Caco-2 (cell line): ENCODE measurements at regions of chr9 and their contacts with region 1.

Region 1: GRCh38 chr9:100426530-100427428 is at the start of gene MSANTD3:
- DNase-seq: peak; percentile 69 to 84
- H3K4me3 ChIP-seq: peak within 1 kb of the TSS; percentile 63
- H3K4me3 Mint-ChIP-seq: peak within 1 kb of the TSS; percentile 99
- H3K27ac Mint-ChIP-seq: peak within 1 kb of the TSS; percentile 99
- H3K4me1 ChIP-seq: peaks cover 20% of the 10 kb centered on the region
- H3K4me1 Mint-ChIP-seq: peaks cover 37% of the 10 kb centered on the region
- H3K27me3 ChIP-seq: no peaks in the 10 kb centered on the region
- H3K27me3 Mint-ChIP-seq: no peaks in the 10 kb centered on the region
- CTCF ChIP-seq: no peak
- total RNA-seq, gene MSANTD3: 25.9 and 27.7 TPM in 2 replicates

Region 2: GRCh38 chr9:100352727-100353505 is 73.9 kb before region 1 on chr9 and contains the start of gene TEX10:
- CTCF ChIA-PET with region 1: no interaction called
- POLR2A ChIA-PET with region 1: no interaction called
- intact Hi-C with region 1: loop called (anchors 5 kb)
- DNase-seq: peak; percentile 90 to 91
- H3K4me3 ChIP-seq: peak within 1 kb of the TSS; percentile 99
- H3K4me3 Mint-ChIP-seq: peak within 1 kb of the TSS; percentile 99
- H3K27ac Mint-ChIP-seq: peak within 1 kb of the TSS; percentile 92
- H3K4me1 ChIP-seq: peaks cover 7% of the 10 kb centered on the region; the same call in 1 of the 2 replicates
- H3K4me1 Mint-ChIP-seq: peaks cover 26% of the 10 kb centered on the region
- H3K27me3 ChIP-seq: no peaks in the 10 kb centered on the region
- H3K27me3 Mint-ChIP-seq: no peaks in the 10 kb centered on the region
- CTCF ChIP-seq: no peak
- total RNA-seq, gene TEX10: 31.1 and 35.0 TPM in 2 replicates

Region 3: DNA sequence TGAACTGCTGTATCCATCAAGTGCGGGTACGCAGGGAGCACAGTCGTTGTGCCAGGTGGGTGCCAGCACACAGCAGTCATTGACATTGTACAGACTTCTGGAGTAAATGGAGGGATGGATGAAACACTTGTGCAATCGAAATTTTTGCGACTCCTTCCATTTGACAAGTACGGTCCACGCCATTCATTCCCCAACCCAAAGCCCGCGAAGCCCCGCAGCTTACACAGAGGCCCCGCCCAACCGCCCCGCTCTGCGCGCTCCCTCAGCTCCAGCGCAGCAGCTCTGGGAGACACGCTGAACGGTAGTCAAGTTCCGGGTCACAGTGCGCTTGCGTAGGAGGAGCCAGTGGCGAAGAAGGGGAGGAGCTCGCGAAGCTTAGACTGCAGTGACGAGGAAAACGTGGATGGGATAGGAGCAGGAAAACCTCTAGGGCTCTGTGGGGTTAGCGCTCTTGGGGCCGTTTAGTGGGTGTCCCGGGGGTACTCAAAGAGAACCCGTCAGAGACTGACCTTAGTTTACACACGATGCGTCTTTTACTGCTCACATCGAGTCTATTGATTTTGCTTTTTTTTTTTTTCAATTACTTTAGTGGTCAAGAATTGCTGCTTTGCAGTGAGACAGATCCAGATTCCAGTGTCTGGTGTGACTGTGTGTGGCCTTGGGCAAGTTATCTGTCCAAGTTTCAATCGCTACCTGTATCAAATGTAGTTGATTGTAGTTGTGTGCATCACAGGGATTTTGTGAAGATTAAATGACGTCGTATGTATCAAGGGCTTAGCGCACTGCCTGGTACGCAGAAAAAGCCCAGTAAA is 15.1 kb before region 1 on chr9:
- CTCF ChIA-PET with region 1: no interaction called
- POLR2A ChIA-PET with region 1: interaction called, 12 read pairs
- intact Hi-C with region 1: loop called (anchors 1 kb)
- DNase-seq: peak; percentile 91 to 95
- H3K4me3 ChIP-seq: peak overlapping the region; percentile 48
- H3K4me3 Mint-ChIP-seq: peak overlapping the region; percentile 74
- H3K27ac Mint-ChIP-seq: peak overlapping the region; percentile 39
- H3K4me1 ChIP-seq: peaks cover 11% of the 10 kb centered on the region; the same call in 1 of the 2 replicates
- H3K4me1 Mint-ChIP-seq: no peaks in the 10 kb centered on the region
- H3K27me3 ChIP-seq: no peaks in the 10 kb centered on the region
- H3K27me3 Mint-ChIP-seq: no peaks in the 10 kb centered on the region
- CTCF ChIP-seq: no peak

Region 4: DNA sequence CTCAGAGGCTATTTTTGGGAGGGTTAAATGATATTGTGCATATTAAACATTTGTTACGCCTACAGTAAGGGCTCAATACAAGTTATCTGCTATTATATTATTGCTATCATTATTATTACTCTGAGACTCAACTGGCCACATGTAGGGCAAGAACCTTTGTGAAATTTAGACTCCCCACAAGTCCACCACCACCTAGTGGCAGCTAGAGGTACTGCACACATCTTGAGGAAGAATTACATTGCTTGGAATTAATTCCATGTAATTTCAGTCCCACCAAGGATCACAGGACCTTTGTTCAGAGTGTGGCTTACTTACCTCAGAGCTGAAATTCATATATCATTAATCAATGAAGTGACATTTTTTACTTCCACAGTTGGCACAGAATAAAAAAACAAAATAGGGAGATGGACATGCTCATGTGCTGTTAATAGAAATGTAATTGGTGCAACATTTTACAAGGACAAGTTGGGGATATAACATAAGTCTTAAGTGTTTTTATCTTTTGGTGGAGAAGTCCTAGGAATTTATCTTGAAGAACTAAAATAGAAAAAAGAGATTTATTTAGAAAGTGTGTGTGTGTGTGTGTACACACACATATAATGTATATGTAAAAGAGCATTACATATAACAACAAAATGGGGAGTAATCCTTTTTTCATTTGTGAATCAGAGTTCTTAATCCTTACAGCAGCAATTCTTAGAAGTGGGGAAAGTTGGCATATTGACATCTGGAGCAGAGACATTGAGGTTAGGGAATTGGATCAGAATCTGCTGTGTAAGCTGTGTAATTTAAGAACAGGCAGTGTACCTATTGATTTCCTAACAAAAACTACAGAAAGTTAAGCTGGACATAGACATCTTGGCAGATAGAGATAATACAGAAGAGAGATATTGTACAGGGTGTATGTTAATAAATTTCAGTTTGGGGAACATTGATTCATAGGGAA is 11.4 kb after region 1 on chr9:
- CTCF ChIA-PET with region 1: interaction called, 9 read pairs
- POLR2A ChIA-PET with region 1: no interaction called
- intact Hi-C with region 1: loop called (anchors 1 kb)
- DNase-seq: peak; percentile 78 to 79
- H3K4me3 ChIP-seq: no peak overlapping the region
- H3K4me3 Mint-ChIP-seq: no peak overlapping the region
- H3K27ac Mint-ChIP-seq: peak overlapping the region; percentile 12
- H3K4me1 ChIP-seq: no peaks in the 10 kb centered on the region
- H3K4me1 Mint-ChIP-seq: peaks cover 17% of the 10 kb centered on the region
- H3K27me3 ChIP-seq: no peaks in the 10 kb centered on the region
- H3K27me3 Mint-ChIP-seq: no peaks in the 10 kb centered on the region
- CTCF ChIP-seq: peak; percentile 85 to 94

Region 5: GRCh38 chr9:100459963-100460362 is 33.2 kb after region 1 on chr9:
- CTCF ChIA-PET with region 1: no interaction called
- POLR2A ChIA-PET with region 1: no interaction called
- intact Hi-C with region 1: no loop called
- DNase-seq: no peak
- H3K4me3 ChIP-seq: no peak overlapping the region
- H3K4me3 Mint-ChIP-seq: no peak overlapping the region
- H3K27ac Mint-ChIP-seq: no peak overlapping the region
- H3K4me1 ChIP-seq: no peaks in the 10 kb centered on the region
- H3K4me1 Mint-ChIP-seq: peaks cover 2% of the 10 kb centered on the region
- H3K27me3 ChIP-seq: no peaks in the 10 kb centered on the region
- H3K27me3 Mint-ChIP-seq: no peaks in the 10 kb centered on the region
- CTCF ChIP-seq: no peak

Region 6: DNA sequence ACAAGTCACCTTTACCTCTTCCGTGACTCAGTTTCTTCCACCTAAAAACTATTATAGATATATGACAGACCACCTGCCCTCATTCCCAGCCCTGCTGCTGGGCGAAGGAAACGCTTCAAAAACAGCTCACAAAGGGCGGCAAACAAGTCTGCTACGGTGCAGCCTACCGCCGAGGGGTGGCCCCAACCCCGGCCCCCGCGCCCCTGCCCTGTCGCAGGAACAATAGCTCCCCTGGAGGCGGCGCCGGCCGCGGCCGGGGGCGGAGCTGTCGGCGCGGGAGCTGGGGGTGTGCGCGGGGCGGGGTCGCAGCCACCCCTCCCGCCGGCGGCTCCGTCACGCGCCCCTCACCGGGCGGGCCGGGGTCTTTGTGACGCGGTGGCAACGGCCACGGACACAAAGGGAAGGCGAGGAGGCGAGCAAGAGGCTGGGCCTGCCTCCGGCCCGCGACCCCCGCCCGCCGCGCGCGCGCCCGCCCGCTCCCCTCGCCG is 46.1 kb after region 1 on chr9 and contains the start of gene TMEFF1:
- CTCF ChIA-PET with region 1: interaction called, 4 read pairs
- POLR2A ChIA-PET with region 1: interaction called, 3 read pairs
- intact Hi-C with region 1: loop called (anchors 2 kb)
- DNase-seq: peak; percentile 48 to 77
- H3K4me3 ChIP-seq: peak within 1 kb of the TSS; percentile 64
- H3K4me3 Mint-ChIP-seq: peak within 1 kb of the TSS; percentile 73
- H3K27ac Mint-ChIP-seq: no peak within 1 kb of the TSS
- H3K4me1 ChIP-seq: no peaks in the 10 kb centered on the region
- H3K4me1 Mint-ChIP-seq: peaks cover 6% of the 10 kb centered on the region
- H3K27me3 ChIP-seq: no peaks in the 10 kb centered on the region
- H3K27me3 Mint-ChIP-seq: peaks cover 3% of the 10 kb centered on the region
- CTCF ChIP-seq: peak; percentile 27 to 34
- total RNA-seq, gene TMEFF1: 2.7 and 4.2 TPM in 2 replicates